Activated naive CD8-positive, alpha-beta T cell treated with anti-CD3 and anti-CD28 coated beads, Interleukin-2, amount 10 ng/mL, durations not matched to agents 7 days and 5 days (primary cell): ENCODE measurements at regions of chr16 and their contacts with region 1.

Region 1: DNA sequence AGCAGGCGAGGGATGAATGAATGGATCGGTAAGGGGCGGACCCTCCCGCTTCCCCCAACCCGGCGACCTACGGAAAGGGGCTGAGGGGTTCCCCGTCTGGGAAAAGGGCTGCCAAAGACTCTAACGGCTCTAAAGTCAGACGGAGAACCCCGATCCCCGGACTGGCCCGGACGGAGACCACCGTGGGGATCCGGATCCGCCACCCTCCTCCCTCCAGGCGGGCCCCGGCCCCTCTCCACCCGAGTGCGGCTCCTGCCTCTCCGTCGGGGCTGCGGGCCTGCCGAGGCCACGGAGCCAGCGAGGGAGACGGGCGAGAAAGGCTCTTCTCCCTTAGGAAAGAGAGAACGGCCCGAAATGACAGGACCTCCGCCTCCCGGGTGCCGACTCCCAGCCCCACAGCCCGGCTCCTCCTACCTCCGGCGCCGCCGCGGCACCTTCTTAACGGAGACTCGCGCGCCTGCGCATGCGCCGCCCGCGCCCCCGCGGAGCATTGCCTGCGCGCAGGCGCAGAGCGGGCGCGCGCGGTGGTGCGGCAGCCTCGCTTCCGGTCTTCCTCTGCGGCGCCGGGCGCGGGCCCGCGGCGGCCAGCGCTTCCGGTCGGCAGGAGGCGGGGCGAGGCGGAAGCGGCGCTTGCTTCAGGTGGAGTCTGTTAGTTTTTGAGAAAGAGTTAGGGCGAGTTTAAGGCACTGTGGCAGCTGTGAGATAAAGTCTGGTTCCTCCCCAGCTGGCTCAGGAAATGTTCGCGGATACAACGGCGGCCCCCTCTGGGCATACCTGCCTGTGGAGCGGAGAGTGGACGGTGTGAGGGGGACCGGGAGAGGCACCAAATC is at the start of gene SLX4:
- DNase-seq: peak; percentile 99
- ATAC-seq: peak; percentile 91
- H3K4me3 Mint-ChIP-seq: peak within 1 kb of the TSS; percentile 100
- H3K27ac Mint-ChIP-seq: peak within 1 kb of the TSS; percentile 100
- H3K4me1 Mint-ChIP-seq: peaks cover 55% of the 10 kb centered on the region
- H3K27me3 Mint-ChIP-seq: no peaks in the 10 kb centered on the region
- total RNA-seq, gene SLX4: 16.8 to 16.9 TPM

Region 2: DNA sequence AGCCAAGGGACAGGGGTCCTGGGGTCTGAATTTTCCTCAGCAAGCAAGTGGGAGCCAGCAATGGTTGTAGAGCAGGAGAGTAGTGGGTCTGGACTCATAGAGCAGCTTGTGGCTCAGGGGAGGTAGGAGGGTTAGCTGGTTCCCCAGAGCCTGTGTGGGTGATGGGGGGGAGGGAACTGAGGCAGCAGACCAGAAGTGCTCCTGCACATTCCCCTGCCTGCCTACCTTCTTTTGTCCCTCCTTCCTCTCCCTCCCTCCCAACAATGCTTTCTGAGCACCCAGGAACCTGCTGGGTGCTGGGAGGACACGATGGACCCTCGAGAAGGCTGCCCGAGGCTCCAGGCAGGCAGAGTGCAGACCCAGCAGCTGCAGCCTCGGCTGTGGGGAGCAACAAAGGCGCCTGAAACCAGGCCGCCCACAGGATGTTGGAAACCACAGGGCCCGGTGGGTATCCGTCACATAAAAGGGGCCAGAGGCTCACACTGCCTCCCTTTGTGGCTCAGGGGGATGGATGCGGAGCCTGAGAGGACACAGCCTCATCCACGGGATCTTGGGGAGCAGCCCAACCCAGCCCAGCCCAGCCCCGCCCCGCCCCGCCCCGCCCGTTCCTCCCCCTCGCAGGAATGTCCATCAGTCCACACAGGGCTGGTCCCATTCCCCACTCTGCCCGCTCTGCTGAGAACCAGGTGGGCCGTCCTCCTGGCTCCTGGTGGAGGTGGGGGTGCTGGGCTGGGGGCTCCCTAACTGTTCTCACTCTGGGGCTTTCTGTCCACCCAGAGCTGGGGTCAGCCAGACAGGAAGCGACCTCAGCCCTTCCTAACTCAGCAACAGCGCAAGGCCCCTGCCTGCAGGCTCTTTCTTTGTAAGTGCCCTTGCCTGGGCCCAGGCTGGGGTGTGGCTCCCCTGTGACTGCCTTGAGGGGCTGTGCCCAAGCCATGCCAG is 32.5 kb before region 1 on chr16:
- POLR2A ChIA-PET with region 1: interaction called, 35 read pairs
- DNase-seq: peak; percentile 87
- ATAC-seq: peak; percentile 57
- H3K4me3 Mint-ChIP-seq: peak overlapping the region; percentile 96
- H3K27ac Mint-ChIP-seq: peak overlapping the region; percentile 96
- H3K4me1 Mint-ChIP-seq: peaks cover 28% of the 10 kb centered on the region
- H3K27me3 Mint-ChIP-seq: no peaks in the 10 kb centered on the region